CD14-positive monocyte (primary cell): ENCODE measurements at regions of chr4 and their contacts with region 1.

Region 1: DNA sequence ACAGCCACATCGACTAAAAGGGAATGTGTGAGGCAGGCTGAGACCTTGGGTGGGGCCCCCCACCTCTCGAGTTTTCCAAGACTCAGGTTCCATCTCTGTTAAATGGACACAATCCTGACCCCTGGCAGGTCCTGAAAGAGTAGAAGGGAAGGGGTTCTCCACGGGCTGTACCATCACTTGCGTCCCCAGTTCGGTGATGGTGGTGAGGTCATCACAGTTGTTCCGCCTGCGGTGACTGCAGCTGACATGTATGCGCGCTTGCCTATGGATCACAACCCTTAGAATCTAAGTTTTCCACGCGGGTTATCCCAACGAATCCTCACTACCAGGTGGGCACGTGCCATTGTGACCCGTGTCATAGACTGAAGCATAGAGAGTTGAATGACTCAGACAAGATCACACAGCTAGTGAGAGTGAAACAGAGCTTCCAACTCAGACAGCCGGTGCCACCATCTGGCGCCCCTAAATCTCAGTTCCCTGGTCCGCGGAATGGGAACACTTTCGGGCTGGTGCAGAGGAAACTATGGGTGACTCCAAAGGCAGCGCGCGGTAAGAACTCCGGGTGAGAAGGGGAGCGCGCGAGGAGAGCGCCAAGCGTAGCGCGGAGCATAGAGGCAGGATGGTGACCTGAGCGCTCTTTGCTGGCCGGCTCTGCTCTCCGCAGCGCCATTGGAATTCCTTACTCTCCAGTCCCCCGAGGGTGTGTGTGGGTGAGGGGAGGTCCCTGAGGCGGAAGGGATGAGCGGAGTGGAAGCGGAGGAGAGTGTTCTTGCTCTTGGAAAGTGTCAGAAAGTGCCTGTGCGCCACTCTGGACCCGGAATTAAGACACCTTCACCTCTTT is 10.5 kb downstream of the MSX1 start:
- DNase-seq: no peak
- H3K4me3 ChIP-seq: no peak overlapping the region
- H3K4me3 Mint-ChIP-seq: peak overlapping the region in 1 of 2 donors; percentile 83
- H3K27ac ChIP-seq: no peak overlapping the region
- H3K27ac Mint-ChIP-seq: no peak overlapping the region
- H3K4me1 ChIP-seq: no peaks in the 10 kb centered on the region
- H3K4me1 Mint-ChIP-seq: peaks cover 4% of the 10 kb centered on the region
- H3K27me3 ChIP-seq: peaks cover 73 to 99% of the 10 kb centered on the region in 2 donors
- H3K27me3 Mint-ChIP-seq: peaks cover 67 to 86% (median 79%) of the 10 kb centered on the region in 3 donors
- CTCF ChIP-seq: no peak

Region 2: DNA sequence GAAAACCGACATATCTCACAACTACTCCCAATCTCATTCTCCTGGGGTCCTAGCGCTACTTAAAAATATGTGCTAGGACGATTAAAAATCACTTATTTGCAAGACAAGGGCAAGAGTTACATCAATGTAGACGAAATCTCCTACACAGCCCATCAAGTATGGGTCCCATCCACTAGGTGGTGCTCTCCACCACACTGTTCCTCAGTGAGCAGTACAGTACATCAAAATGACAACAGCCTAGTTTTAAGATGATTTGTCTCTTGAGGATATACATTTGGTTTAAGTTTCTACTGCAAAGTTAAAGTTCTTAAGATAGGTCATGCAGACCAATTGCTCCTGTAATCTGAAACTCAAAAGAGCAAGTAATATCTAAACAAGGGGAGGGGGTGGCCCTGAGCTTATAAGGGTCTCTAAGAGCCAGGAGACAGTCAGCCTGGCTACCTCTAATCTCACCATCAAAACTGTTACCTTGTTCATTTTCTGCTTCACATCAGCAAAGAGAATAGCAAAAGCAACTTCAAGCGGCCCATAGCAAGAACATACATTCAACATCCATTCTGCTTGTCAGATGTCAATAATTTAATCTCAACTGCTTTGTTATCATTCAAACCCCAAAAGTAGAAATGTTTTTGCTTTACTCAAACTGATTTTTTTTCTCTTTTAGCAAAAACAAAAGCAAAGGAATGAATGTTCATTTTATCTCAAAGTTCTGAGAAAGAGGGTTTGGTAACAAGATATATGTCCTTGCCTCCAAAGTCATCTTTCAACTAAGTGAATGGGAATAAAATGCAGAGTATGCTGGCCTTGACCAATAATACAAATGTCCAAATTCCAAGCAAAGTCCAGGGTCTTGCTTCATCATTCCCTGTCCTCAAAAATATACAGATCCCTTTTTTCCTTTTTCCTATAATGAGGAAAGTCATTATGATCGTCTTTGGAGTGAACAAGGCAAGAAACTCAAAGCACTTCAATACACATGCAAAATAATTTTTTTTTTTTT is 381.2 kb before region 1 on chr4:
- intact Hi-C with region 1: loop called in 1 of 2 experiments (anchors 10 kb)
- DNase-seq: peak; percentile 49 to 62 (median 56)
- H3K4me3 ChIP-seq: no peak overlapping the region
- H3K4me3 Mint-ChIP-seq: no peak overlapping the region
- H3K27ac ChIP-seq: no peak overlapping the region
- H3K27ac Mint-ChIP-seq: no peak overlapping the region
- H3K4me1 ChIP-seq: no peaks in the 10 kb centered on the region
- H3K4me1 Mint-ChIP-seq: peaks cover 7% of the 10 kb centered on the region
- H3K27me3 ChIP-seq: no peaks in the 10 kb centered on the region
- H3K27me3 Mint-ChIP-seq: peaks cover 0 to 2% (median 2%) of the 10 kb centered on the region in 3 donors
- CTCF ChIP-seq: peak; percentile 93